Right lobe of liver (tissue), 6 donors: ENCODE measurements at regions of chr18 and their contacts with region 1.

Region 1: GRCh38 chr18:6414118-6414722 is 491 bp downstream of the L3MBTL4 start:
- DNase-seq: peak; percentile 84 to 87 (median 87)
- ATAC-seq: peak; percentile 83 to 90 (median 84)
- H3K4me3 ChIP-seq: peak overlapping the region; percentile 84 to 91 (median 86)
- H3K27ac ChIP-seq: peak overlapping the region; percentile 94 to 98 (median 96)
- H3K4me1 ChIP-seq: peaks cover 0 to 11% (median 4%) of the 10 kb centered on the region in 4 donors
- H3K27me3 ChIP-seq: no peaks in the 10 kb centered on the region
- CTCF ChIP-seq: peak; percentile 3 to 36 (median 22)
- POLR2A ChIP-seq: peak; percentile 52

Region 2: DNA sequence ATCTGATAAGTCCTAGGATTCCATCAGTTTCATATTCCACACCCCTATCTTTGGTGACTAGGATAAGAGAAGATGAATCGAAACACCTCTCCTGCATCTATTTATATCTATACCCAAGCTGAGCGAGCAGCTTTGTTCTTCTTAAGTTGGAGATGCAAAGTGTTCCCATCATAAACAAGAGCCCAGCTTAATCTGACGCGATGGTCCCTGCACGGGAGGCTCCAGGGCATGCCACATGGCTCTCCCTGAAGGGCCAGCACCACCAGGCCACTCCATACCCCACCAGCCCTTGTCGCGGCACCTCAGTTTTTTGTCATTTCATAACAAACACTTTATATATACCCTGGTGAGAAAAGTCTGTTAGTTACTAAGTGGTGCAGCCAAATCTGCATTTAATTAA is 254.8 kb before region 1 on chr18:
- intact Hi-C with region 1: no loop called
- DNase-seq: no peak
- ATAC-seq: no peak
- H3K4me3 ChIP-seq: no peak overlapping the region
- H3K27ac ChIP-seq: peak overlapping the region in 2 of 3 donors; percentile 77 to 88
- H3K4me1 ChIP-seq: peaks cover 0 to 8% (median 3%) of the 10 kb centered on the region in 4 donors
- H3K27me3 ChIP-seq: no peaks in the 10 kb centered on the region
- CTCF ChIP-seq: no peak
- POLR2A ChIP-seq: no peak

Region 3: GRCh38 chr18:6236258-6236657 is 178.0 kb before region 1 on chr18:
- intact Hi-C with region 1: no loop called
- DNase-seq: no peak
- ATAC-seq: no peak
- H3K4me3 ChIP-seq: no peak overlapping the region
- H3K27ac ChIP-seq: no peak overlapping the region
- H3K4me1 ChIP-seq: no peaks in the 10 kb centered on the region
- H3K27me3 ChIP-seq: no peaks in the 10 kb centered on the region
- CTCF ChIP-seq: no peak
- POLR2A ChIP-seq: no peak

Region 4: DNA sequence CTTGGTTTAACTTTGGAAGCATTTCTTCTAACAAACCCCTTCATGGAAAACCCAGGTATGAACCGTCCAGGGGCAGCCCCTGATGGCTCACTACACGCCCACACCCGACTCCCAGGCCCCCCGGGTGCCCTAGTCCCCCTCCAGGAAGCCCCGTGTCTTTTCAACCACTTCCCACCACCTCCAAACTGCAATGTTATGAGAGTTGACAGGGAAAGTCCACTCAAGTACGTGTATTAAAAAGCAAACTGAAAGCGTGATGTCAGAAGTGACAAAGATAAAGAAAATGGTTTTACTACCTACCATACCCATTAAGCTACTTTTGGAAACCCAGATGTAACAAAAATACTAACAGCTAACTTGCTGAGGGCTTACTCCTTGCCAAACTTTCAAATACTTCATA is 51.0 kb before region 1 on chr18:
- intact Hi-C with region 1: loop called in 1 of 2 experiments (anchors 10 kb)
- DNase-seq: no peak
- ATAC-seq: no peak
- H3K4me3 ChIP-seq: no peak overlapping the region
- H3K27ac ChIP-seq: peak overlapping the region in 1 of 3 donors; percentile 16
- H3K4me1 ChIP-seq: peaks cover 0 to 34% (median 15%) of the 10 kb centered on the region in 4 donors
- H3K27me3 ChIP-seq: no peaks in the 10 kb centered on the region
- CTCF ChIP-seq: no peak
- POLR2A ChIP-seq: no peak